ENCODE measurements at regions of chr11 and their contacts with region 1.

Region 1: GRCh38 chr11:108222686-108223448 is at the start of gene ATM:
- DNase-seq: peak; percentile 99 to 100
- ATAC-seq: peak; percentile 96 to 99 (median 98)
- H3K4me3 ChIP-seq: peak within 1 kb of the TSS; percentile 61 to 91 (median 74)
- H3K27ac ChIP-seq: peak within 1 kb of the TSS; percentile 80 to 93 (median 90)
- H3K4me1 ChIP-seq: peaks cover 3 to 68% (median 38%) of the 10 kb centered on the region in 9 donors
- H3K27me3 ChIP-seq: no peaks in the 10 kb centered on the region
- CTCF ChIP-seq: peak; percentile 33 to 94 (median 73)
- total RNA-seq, gene ATM: 23.5 to 50.7 (median 34.1) TPM

Region 2: GRCh38 chr11:108008656-108009496 is 214.0 kb before region 1 on chr11 and contains the start of gene CUL5:
- intact Hi-C with region 1: loop called in 2 of 10 experiments (anchors 5 kb)
- DNase-seq: peak; percentile 92 to 94
- ATAC-seq: peak; percentile 96 to 98 (median 98)
- H3K4me3 ChIP-seq: peak within 1 kb of the TSS; percentile 73 to 100 (median 88)
- H3K27ac ChIP-seq: peak within 1 kb of the TSS; percentile 91 to 99 (median 97)
- H3K4me1 ChIP-seq: peaks cover 2 to 47% (median 41%) of the 10 kb centered on the region in 9 donors
- H3K27me3 ChIP-seq: no peaks in the 10 kb centered on the region
- CTCF ChIP-seq: peak; percentile 83 to 94 (median 91)
- total RNA-seq, gene CUL5: 34.8 to 51.3 (median 42.6) TPM

Region 3: DNA sequence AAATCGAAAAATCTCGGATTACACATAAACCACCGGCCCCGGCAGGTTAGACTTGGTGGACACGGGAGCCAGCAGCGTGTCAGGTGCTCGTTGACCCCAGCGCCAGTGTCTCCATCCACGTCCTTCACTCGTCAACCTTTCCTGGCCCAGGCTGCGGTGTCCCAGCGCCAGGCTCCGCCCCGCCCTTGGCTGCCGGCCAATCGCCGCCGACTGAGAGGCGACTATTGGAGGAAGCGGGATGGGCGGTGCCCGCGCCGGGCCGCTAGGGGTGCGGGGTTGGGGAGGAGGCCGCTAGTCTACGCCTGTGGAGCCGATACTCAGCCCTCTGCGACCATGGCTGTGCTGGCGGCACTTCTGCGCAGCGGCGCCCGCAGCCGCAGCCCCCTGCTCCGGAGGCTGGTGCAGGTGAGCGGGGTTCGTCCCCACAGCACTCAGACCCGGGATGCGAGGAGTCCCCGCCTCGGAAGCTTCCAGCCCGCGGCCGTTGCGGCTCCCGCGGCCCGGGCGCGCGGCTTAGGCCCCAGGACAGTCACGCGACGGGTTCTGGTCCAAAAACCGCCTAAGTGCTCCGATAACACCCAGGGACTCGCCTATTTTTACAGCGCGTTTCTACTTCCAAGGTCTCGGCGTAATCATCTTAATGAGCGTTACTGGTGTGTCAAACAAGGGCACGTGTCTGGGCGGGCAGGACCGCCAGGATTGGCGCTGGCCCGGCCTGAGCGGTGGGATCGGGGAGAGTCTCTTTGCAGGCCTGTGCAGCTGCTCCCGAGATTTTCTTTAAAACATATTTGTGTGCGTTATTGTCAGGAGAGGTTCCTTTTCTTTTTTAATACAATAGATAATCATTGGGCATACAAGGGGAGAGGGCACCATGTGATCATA is 101.4 kb before region 1 on chr11 and contains the start of gene ACAT1:
- intact Hi-C with region 1: loop called in 6 of 10 experiments (anchors 2 to 10 kb)
- DNase-seq: peak; percentile 98 to 99
- ATAC-seq: peak; percentile 95 to 97 (median 96)
- H3K4me3 ChIP-seq: peak within 1 kb of the TSS; percentile 59 to 90 (median 74)
- H3K27ac ChIP-seq: peak within 1 kb of the TSS; percentile 92 to 99 (median 96)
- H3K4me1 ChIP-seq: peaks cover 9 to 54% (median 38%) of the 10 kb centered on the region in 9 donors
- H3K27me3 ChIP-seq: no peaks in the 10 kb centered on the region
- CTCF ChIP-seq: peak in 8 of 9 donors; percentile 5 to 51 (median 38)
- total RNA-seq, gene ACAT1: 219 to 535 (median 412) TPM

Region 4: DNA sequence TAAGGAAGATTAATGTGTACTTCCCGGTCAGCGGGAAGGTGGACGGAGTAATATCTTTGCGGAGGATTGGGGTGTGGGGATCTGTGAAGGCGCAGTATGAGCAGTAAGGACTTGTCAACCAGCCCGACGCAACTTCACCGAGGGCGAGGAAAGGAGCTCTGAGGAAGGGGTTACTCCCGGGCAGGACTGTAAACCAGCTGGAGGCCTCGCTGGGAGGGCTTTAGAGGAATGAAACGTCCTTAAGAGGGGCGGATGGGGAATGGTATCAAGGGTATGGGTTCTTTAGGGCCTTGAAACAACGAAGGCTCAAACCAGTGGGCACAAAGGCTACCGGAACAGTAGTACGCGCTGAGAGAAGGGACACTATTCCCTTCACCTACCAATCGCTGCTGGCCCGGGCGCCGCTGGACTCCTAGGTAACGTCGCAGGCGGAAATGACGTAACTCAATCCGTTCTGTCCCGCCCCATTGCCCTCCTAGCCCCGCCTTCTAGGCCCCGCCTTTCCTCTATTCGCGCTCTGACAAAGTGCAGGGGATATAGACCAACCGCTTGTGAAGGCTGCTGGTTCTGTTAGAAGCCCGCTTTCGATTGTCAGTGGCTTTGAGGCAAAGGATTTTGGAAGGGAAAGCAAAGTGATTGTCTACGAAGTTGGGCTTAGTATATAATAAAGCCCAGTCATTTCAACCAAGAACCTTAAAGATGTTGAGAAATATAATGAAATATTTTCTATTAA is 244.4 kb after region 1 on chr11 and contains the start of gene C11orf65:
- intact Hi-C with region 1: loop called in 2 of 10 experiments (anchors 2 to 10 kb)
- DNase-seq: peak; percentile 94 to 97
- ATAC-seq: peak; percentile 99 to 100 (median 100)
- H3K4me3 ChIP-seq: peak within 1 kb of the TSS; percentile 51 to 74 (median 66)
- H3K27ac ChIP-seq: peak within 1 kb of the TSS; percentile 94 to 99 (median 98)
- H3K4me1 ChIP-seq: peaks cover 0 to 22% (median 8%) of the 10 kb centered on the region in 9 donors
- H3K27me3 ChIP-seq: no peaks in the 10 kb centered on the region
- CTCF ChIP-seq: no peak
- total RNA-seq, gene C11orf65: 0.39 to 1.6 (median 1.1) TPM in 9 of 10 donors, not detected in the other

Region 5: GRCh38 chr11:108497317-108498045 is 274.6 kb after region 1 on chr11:
- intact Hi-C with region 1: loop called in 1 of 10 experiments (anchors 10 kb)
- DNase-seq: peak; percentile 77 to 89
- ATAC-seq: peak; percentile 93 to 98 (median 96)
- H3K4me3 ChIP-seq: peak overlapping the region; percentile 62 to 83 (median 76)
- H3K27ac ChIP-seq: peak overlapping the region; percentile 83 to 100 (median 95)
- H3K4me1 ChIP-seq: peaks cover 3 to 22% (median 18%) of the 10 kb centered on the region in 9 donors
- H3K27me3 ChIP-seq: no peaks in the 10 kb centered on the region
- CTCF ChIP-seq: no peak

Measured in heart right ventricle (tissue), 16 donors.